ENCODE measurements at regions of chr17 and their contacts with region 1.

Region 1: DNA sequence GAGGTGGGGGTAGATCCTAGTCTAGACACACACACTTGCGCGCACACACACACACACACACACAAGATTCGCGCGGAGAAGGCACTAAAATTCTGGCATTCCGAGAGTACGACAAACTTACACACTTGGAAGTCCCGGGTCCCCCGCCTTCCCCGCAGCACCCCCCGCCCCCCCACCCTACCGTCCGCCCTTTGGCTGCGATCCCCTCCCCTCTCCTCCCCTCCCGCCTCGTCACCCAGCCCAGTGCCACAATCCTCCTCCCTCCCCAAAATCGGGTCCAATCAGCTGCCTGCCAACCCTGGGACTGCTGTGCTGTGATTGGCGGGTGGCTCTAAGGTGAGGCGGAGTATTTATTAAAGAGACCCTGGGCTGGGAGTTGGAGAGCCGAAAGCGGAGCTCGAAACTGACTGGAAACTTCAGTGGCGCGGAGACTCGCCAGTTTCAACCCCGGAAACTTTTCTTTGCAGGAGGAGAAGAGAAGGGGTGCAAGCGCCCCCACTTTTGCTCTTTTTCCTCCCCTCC is at the start of gene SOX9:
- DNase-seq: peak; percentile 95
- ATAC-seq: peak; percentile 94
- H3K4me3 ChIP-seq: peak within 1 kb of the TSS; percentile 93 to 99
- H3K27ac ChIP-seq: peak within 1 kb of the TSS; percentile 72
- H3K4me1 ChIP-seq: peaks cover 23 to 49% of the 10 kb centered on the region in 2 experiments
- H3K27me3 ChIP-seq: no peaks in the 10 kb centered on the region
- CTCF ChIP-seq: no peak
- POLR2A ChIP-seq: peak; percentile 97
- RAD21 ChIP-seq: peak; percentile 26; the same call in 1 of the 2 replicates
- total RNA-seq, gene SOX9: 69.2 TPM

Region 2: GRCh38 chr17:70636517-70637133 is 1484.1 kb before region 1 on chr17:
- CTCF ChIA-PET with region 1: no interaction called
- POLR2A ChIA-PET with region 1: no interaction called
- RAD21 ChIA-PET with region 1: no interaction called
- intact Hi-C with region 1: loop called (anchors 2 kb)
- DNase-seq: peak; percentile 54
- ATAC-seq: peak; percentile 63
- H3K4me3 ChIP-seq: no peak overlapping the region
- H3K27ac ChIP-seq: no peak overlapping the region
- H3K4me1 ChIP-seq: no peaks in the 10 kb centered on the region
- H3K27me3 ChIP-seq: no peaks in the 10 kb centered on the region
- CTCF ChIP-seq: peak; percentile 61 to 86 (median 70); a peak in 5 of 6 replicates
- POLR2A ChIP-seq: no peak
- RAD21 ChIP-seq: peak; percentile 91

Region 3: DNA sequence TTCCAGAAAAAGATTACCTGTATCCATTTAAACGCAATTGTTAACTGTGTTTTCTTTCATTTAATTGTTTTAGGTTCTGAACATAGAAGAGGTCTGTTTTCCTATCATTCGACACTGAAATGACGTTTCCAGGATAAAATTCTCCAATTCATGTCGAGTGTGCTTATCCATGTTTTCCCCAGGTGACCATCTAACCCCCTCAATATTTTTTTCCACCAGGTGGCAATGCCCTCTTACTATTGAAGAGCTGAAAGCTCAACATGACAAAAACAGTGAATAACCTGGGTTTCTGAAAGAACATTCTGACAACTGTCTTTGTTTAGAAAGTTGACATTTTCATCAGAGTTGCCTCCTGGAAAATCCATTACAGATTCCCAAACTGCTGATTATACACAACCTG is 1002.7 kb before region 1 on chr17:
- CTCF ChIA-PET with region 1: interaction called, 4 read pairs
- POLR2A ChIA-PET with region 1: no interaction called
- RAD21 ChIA-PET with region 1: no interaction called
- intact Hi-C with region 1: loop called (anchors 2 kb)
- DNase-seq: peak; percentile 29
- ATAC-seq: peak; percentile 46; the same call in 1 of the 2 replicates
- H3K4me3 ChIP-seq: no peak overlapping the region
- H3K27ac ChIP-seq: no peak overlapping the region
- H3K4me1 ChIP-seq: no peaks in the 10 kb centered on the region
- H3K27me3 ChIP-seq: no peaks in the 10 kb centered on the region
- CTCF ChIP-seq: peak; percentile 55 to 77 (median 66); a peak in 5 of 6 replicates
- POLR2A ChIP-seq: no peak
- RAD21 ChIP-seq: peak; percentile 86

Region 4: DNA sequence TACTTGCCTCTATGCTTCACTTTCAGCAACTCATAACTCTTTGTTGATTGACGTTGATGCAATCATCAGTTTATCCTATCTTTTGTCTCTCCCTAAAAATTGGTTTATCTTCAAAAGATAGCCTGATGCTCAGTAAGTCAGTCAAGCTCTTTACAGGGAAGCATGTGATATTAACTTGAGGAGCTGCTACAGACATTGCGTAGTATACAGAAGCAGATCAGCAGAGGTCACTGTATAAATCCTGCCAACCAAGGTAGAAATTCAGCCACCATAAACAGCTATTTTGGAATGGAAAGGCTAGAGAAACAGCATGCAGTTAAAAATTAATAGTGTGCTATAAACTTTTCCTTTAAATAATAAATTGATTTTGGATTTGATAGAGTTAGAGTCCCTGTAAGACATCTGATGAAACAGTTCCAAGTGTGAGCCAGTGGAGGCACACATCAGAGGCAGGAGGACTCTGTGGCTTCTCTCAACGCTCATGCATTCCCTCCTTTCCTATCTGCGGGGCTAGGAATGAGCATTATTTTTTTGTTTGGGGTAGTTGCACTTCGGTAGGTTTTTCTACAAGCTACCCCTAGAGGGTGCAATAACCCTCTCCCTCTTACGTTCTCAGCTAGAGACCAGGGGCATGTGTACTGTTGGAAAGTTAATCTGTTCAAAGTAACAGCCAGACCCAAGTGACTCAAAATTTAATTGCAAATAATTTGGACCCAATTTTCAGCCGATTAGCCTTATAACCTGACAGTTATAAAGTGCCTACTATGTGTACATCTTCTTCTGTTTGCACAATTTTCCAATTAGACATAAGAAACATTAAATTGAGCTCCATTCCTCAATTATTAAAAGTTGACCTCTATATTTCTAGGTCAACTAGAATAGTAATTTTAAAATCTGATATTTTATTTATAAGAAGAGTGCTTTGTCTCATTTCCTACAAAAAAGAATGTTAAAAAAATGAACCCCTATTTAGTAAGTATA is 647.6 kb before region 1 on chr17:
- CTCF ChIA-PET with region 1: interaction called, 19 read pairs
- POLR2A ChIA-PET with region 1: interaction called, 5 read pairs
- RAD21 ChIA-PET with region 1: no interaction called
- intact Hi-C with region 1: loop called (anchors 1 kb)
- DNase-seq: peak; percentile 86
- ATAC-seq: peak; percentile 99
- H3K4me3 ChIP-seq: no peak overlapping the region
- H3K27ac ChIP-seq: no peak overlapping the region
- H3K4me1 ChIP-seq: peaks cover 0 to 11% of the 10 kb centered on the region in 2 experiments; a peak in 2 of 4 replicates
- H3K27me3 ChIP-seq: no peaks in the 10 kb centered on the region
- CTCF ChIP-seq: peak; percentile 79 to 93 (median 88)
- POLR2A ChIP-seq: no peak
- RAD21 ChIP-seq: peak; percentile 89

Region 5: DNA sequence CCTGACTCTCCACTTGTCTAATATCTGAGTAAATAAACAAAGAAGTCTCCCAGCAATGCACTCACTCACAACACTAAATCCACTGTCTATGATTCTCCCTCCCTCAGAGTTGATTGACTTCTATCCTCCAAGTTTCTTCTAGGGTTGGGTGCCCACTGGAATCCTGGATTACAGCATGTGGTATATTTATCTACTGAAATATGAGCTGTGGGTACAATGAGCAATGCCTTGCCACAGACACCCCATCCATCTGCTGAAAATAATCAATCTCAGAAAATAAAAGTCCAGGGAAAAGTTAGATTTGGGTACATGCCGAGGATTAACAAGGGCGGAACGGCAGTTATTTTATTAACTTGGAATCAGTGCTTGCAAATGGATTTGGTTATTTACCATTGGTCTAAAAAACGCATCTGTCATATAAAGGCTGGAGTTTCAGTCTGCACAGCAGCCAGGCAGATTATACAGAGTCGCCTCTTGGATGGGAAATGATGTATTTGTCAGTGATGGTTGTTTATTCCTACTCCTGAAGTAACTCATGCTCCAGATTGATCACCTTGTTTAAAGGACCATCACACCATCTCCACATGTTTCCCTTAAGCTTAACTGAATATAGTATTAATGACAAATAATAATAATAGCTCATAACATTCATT is 193.8 kb before region 1 on chr17:
- CTCF ChIA-PET with region 1: no interaction called
- POLR2A ChIA-PET with region 1: no interaction called
- RAD21 ChIA-PET with region 1: no interaction called
- intact Hi-C with region 1: no loop called
- DNase-seq: no peak
- ATAC-seq: no peak
- H3K4me3 ChIP-seq: no peak overlapping the region
- H3K27ac ChIP-seq: no peak overlapping the region
- H3K4me1 ChIP-seq: peaks cover 0 to 13% of the 10 kb centered on the region in 2 experiments; a peak in 2 of 4 replicates
- H3K27me3 ChIP-seq: no peaks in the 10 kb centered on the region
- CTCF ChIP-seq: no peak
- POLR2A ChIP-seq: no peak
- RAD21 ChIP-seq: no peak

Region 6: DNA sequence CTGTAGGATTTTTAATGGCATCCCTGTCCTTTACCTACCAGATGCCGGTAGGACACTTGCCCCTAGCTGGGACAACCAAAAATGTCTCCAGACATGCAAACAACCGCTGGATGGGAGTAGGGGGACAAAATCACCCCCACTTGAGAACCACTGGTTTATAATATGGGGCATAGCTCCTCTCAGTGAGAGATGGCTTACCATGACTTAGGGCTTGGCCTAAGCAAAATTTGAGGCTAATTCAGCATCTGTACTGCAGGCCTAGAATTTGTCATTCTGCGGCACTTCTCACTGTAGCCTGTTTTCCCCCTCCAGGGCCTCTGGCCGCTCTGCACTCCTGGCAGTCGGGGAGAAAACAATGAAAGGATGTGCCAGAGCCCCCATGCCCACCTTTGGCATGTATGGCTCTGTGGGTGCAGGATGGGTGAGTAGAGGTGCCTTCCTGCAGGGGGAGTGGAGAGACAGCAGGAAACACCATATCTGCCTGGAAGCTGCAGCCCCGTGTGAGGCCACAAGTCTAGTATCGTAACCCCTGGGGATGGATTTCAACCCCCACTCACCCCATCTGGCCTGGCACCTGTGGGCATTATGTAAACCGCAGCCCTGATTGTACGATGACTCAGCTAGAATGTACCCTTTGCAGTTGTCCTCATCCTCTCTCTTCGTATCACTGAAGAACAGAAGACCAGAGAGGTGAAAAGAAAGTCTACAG is 268.2 kb after region 1 on chr17:
- CTCF ChIA-PET with region 1: interaction called, 5 read pairs
- POLR2A ChIA-PET with region 1: interaction called, 14 read pairs
- RAD21 ChIA-PET with region 1: interaction called in 1 of 2 experiments, 6 read pairs
- intact Hi-C with region 1: loop called (anchors 5 kb)
- DNase-seq: peak; percentile 83
- ATAC-seq: peak; percentile 74
- H3K4me3 ChIP-seq: peak overlapping the region in 1 of 2 experiments; percentile 19; a peak in 1 of 4 replicates
- H3K27ac ChIP-seq: peak overlapping the region; percentile 76
- H3K4me1 ChIP-seq: peaks cover 87 to 95% of the 10 kb centered on the region in 2 experiments
- H3K27me3 ChIP-seq: no peaks in the 10 kb centered on the region
- CTCF ChIP-seq: peak in 2 of 3 experiments; percentile 77 to 86; a peak in 5 of 6 replicates
- POLR2A ChIP-seq: no peak
- RAD21 ChIP-seq: peak; percentile 76

Region 7: DNA sequence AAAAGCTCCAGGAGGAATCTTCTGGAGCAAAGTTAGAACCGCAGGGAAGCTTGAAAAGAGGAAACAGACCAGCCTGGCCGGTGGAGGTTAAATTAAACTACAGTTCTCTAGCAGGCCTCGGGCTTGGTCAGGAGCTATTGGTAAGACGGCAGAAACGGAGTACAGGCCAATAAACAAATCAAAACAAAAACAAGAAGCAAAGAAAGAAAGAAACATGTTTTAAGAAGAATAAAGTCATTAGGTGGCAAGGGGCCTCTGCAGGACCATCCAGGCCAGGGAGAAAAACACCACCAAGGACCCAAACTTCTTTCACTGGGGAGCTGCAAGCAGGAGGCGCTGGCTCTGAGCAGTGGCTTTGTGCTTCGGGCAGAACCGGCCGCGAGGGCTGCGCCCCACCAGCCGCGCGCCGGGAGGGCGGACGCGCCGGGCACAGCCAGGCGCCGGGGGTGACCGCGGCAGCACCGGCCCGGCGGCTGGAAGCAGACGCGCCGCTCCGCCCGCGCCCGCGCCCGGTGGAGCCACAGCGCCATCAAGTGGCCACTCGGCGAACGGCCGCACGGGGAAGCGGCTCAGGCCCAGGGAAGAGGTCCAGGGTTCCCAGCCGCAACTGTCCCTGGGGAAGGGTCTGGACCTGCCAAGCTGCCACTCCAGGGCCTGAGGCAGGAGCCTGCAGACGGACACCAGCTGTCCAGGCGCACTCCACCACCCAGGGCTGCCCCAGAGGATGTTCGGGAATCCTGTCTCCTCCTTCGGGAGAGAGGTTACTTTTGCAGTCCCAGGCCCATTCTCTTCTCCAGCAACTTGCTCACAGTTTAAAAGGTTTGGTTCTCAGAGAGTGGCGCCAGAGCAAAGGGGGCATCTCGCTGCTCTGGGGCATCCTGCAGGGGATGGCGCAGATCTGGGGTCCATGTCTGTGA is 419.5 kb after region 1 on chr17:
- CTCF ChIA-PET with region 1: interaction called, 6 read pairs
- POLR2A ChIA-PET with region 1: interaction called, 5 read pairs
- RAD21 ChIA-PET with region 1: interaction called, 3 read pairs
- intact Hi-C with region 1: loop called (anchors 2 kb)
- DNase-seq: peak; percentile 45
- ATAC-seq: peak; percentile 93
- H3K4me3 ChIP-seq: peak overlapping the region; percentile 19 to 23
- H3K27ac ChIP-seq: peak overlapping the region; percentile 34
- H3K4me1 ChIP-seq: peaks cover 7 to 18% of the 10 kb centered on the region in 2 experiments
- H3K27me3 ChIP-seq: no peaks in the 10 kb centered on the region
- CTCF ChIP-seq: peak; percentile 45 to 91 (median 78); a peak in 5 of 6 replicates
- POLR2A ChIP-seq: no peak
- RAD21 ChIP-seq: peak; percentile 95